ENCODE measurements at regions of chr1 and their contacts with region 1.

Region 1: GRCh38 chr1:94962409-94963265 is 35.7 kb upstream of the CNN3 start:
- DNase-seq: no peak
- H3K4me3 ChIP-seq: peak overlapping the region; percentile 51
- H3K27ac ChIP-seq: peak overlapping the region; percentile 39
- H3K27me3 ChIP-seq: no peaks in the 10 kb centered on the region
- CTCF ChIP-seq: no peak

Region 2: GRCh38 chr1:95035536-95035935 is 72.9 kb after region 1 on chr1:
- CTCF ChIA-PET with region 1: interaction called, 3 read pairs
- POLR2A ChIA-PET with region 1: interaction called, 10 read pairs
- DNase-seq: peak; percentile 84
- H3K4me3 ChIP-seq: no peak overlapping the region
- H3K27ac ChIP-seq: peak overlapping the region; percentile 58
- H3K27me3 ChIP-seq: no peaks in the 10 kb centered on the region
- CTCF ChIP-seq: no peak

Region 3: GRCh38 chr1:95098196-95098595 is 135.6 kb after region 1 on chr1:
- CTCF ChIA-PET with region 1: no interaction called
- POLR2A ChIA-PET with region 1: no interaction called
- DNase-seq: no peak
- H3K4me3 ChIP-seq: no peak overlapping the region
- H3K27ac ChIP-seq: no peak overlapping the region
- H3K27me3 ChIP-seq: peaks cover 7% of the 10 kb centered on the region
- CTCF ChIP-seq: no peak